ENCODE measurements at regions of chr4 and their contacts with region 1.

Region 1: GRCh38 chr4:145618932-145619638 is at the start of gene MMAA:
- DNase-seq: peak; percentile 95
- H3K4me3 ChIP-seq: peak within 1 kb of the TSS; percentile 97
- H3K27ac ChIP-seq: peak within 1 kb of the TSS; percentile 92
- H3K4me1 ChIP-seq: peaks cover 24% of the 10 kb centered on the region
- CTCF ChIP-seq: peak; percentile 81
- total RNA-seq, gene MMAA: 1.6 and 2.5 TPM in 2 replicates

Region 2: DNA sequence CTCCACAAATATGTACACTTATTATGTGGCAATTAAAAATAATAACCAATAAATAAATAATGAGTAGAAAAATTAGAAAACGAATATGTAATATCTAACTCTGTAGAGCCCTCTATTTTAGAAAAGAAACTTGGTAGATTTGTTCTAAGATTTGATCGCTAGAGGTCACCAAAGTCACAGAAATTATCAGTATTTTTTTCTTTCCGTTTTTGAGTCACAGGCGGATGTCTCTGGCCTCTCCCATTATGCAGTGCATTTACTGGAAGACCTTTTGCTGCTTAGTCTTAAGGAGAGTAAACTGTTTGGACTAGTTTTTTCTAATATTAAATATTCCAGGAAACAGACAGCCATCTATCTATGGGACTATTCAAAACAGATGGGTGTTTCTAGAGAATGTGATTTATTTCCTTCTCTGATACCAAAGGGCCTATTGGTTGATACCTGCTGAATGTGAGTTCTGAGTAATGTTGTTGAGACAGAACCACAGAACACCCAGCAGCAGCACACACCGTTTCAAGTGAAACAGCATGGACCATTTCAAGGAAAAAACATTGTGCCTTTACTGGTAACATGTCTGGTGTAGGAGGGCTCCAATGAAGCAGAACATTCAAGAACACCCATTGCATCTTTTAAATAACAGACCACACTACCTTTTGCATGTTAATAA is 1444.6 kb before region 1 on chr4:
- CTCF ChIA-PET with region 1: no interaction called
- POLR2A ChIA-PET with region 1: no interaction called
- intact Hi-C with region 1: loop called (anchors 10 kb)
- DNase-seq: peak; percentile 54
- H3K4me3 ChIP-seq: no peak overlapping the region
- H3K27ac ChIP-seq: no peak overlapping the region
- H3K4me1 ChIP-seq: no peaks in the 10 kb centered on the region
- CTCF ChIP-seq: peak; percentile 81

Region 3: GRCh38 chr4:145154573-145154972 is 464.5 kb before region 1 on chr4:
- CTCF ChIA-PET with region 1: no interaction called
- POLR2A ChIA-PET with region 1: no interaction called
- intact Hi-C with region 1: loop called (anchors 2 kb)
- DNase-seq: peak; percentile 51
- H3K4me3 ChIP-seq: no peak overlapping the region
- H3K27ac ChIP-seq: no peak overlapping the region
- H3K4me1 ChIP-seq: peaks cover 22% of the 10 kb centered on the region
- CTCF ChIP-seq: peak; percentile 82

Region 4: DNA sequence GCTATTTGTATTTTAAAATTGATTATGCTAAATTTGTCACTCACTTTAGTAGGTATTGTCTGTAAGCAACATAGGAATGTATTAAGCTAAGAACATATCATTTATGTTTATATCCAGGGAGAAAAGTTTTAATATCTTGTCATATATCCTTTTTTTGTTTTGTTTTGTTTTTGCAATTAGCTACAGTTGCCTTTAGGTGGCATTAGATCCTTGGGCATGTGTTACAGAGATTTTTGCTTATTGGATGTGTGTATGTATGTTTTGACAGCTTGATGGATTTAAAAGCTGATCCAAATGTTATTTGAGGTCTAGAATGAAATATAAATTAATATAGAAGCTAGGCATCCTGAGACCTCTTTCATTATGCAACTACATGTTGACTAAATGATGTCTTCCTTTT is 402.6 kb before region 1 on chr4:
- CTCF ChIA-PET with region 1: interaction called, 4 read pairs
- POLR2A ChIA-PET with region 1: interaction called, 3 read pairs
- intact Hi-C with region 1: loop called (anchors 5 kb)
- DNase-seq: peak; percentile 64
- H3K4me3 ChIP-seq: no peak overlapping the region
- H3K27ac ChIP-seq: no peak overlapping the region
- H3K4me1 ChIP-seq: peaks cover 21% of the 10 kb centered on the region
- CTCF ChIP-seq: peak; percentile 96

Region 5: DNA sequence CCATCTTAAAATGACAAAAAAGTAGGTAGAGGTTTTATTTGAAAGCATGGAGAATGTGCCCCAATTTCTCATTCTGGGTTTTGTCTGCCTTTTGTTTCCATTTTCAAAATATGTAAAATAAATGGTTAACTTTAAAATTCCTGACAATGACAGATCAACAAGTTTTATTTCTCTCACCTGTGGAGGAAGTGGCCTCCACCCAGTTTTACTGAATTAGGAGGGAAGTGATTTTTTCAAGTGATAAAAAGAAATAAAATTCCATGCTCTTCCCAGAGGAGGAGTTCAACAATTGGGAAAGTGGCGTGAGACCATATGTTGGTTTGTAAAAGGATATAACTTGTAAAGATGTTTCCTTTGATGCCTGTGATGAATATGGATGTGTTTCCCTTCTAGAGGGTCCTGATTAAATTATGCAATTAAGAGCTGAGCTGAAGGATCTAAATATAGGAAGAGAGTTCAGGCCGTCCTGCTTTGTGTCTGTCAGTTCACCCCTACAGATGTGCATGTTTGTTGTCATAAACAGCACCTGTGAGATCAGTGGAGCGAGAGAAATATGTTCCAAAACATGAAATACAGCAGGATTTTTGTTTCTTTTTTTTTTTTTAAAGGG is 117.9 kb before region 1 on chr4:
- CTCF ChIA-PET with region 1: no interaction called
- POLR2A ChIA-PET with region 1: interaction called, 6 read pairs
- intact Hi-C with region 1: loop called (anchors 2 kb)
- DNase-seq: peak; percentile 96
- H3K4me3 ChIP-seq: peak overlapping the region; percentile 51
- H3K27ac ChIP-seq: peak overlapping the region; percentile 99
- H3K4me1 ChIP-seq: peaks cover 100% of the 10 kb centered on the region
- CTCF ChIP-seq: 0 out of 2 replicates have a peak, but pooled peaks have one; percentile 3

Region 6: GRCh38 chr4:145589916-145590702 is 29.0 kb before region 1 on chr4:
- CTCF ChIA-PET with region 1: no interaction called
- POLR2A ChIA-PET with region 1: no interaction called
- intact Hi-C with region 1: no loop called
- DNase-seq: no peak
- H3K4me3 ChIP-seq: no peak overlapping the region
- H3K27ac ChIP-seq: no peak overlapping the region
- H3K4me1 ChIP-seq: peaks cover 4% of the 10 kb centered on the region
- CTCF ChIP-seq: no peak

Region 7: DNA sequence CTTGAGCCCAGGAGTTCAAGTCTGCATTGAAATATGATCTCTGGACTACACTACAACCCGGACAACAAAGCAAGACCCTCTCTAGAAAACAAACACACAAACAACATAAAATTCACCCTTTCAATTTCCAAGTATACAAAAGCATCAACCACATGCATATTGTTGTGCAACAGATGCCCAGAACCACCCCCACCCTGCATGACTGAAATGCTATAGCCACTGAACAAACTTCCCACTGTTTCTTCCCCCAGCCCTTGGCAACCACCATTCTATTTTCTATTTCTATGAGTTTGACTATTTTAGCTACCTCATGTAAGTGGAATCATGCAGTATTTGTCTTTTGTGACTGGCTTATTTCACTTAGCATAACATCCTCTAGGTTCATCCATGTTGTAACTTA is 46.7 kb after region 1 on chr4:
- CTCF ChIA-PET with region 1: no interaction called
- POLR2A ChIA-PET with region 1: no interaction called
- intact Hi-C with region 1: no loop called
- DNase-seq: no peak
- H3K4me3 ChIP-seq: no peak overlapping the region
- H3K27ac ChIP-seq: no peak overlapping the region
- H3K4me1 ChIP-seq: no peaks in the 10 kb centered on the region
- CTCF ChIP-seq: no peak

Region 8: DNA sequence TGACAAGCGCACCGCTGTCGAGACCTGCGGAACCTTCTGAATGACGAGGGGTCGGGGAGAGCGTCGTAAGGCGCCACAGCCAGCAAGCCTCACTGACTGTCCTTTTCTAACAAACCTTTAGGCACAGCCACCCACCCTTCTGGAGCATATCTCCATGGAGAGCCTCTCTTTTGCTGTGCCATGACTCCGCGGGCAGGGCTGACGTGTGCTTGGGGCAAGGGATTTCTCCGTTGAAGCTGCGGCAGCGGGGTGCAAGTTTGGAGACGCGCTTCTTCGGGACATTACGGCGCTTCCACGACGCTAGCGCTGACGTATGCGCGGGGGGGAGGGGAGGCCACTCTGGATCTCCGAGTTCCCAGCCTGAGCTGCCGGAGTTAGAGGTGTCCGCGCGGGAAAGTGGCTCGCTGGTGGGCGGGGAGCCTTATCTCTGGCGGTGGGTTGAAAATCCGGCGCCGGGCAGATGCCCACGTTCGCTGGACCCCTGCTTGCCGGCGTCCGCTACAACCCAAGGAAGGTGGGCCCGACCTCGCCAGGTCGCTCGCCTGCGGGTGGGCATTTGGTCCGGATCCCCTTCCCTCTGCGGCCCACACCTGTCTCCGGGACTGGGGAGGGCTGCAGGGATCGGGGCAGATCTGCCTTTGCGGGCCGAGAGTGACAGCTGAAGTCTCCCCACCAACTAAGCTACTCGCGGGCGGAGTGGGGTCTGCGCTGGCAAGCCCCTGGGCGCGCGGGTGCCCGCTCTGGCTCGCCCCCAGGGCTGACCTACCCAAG is 903.2 kb after region 1 on chr4:
- CTCF ChIA-PET with region 1: no interaction called
- POLR2A ChIA-PET with region 1: no interaction called
- intact Hi-C with region 1: loop called (anchors 1 kb)
- DNase-seq: peak; percentile 88
- H3K4me3 ChIP-seq: peak overlapping the region; percentile 82
- H3K27ac ChIP-seq: peak overlapping the region; percentile 54
- H3K4me1 ChIP-seq: peaks cover 17% of the 10 kb centered on the region
- CTCF ChIP-seq: no peak